Caco-2 (cell line): ENCODE measurements at regions of chr10 and their contacts with region 1.

Region 1: GRCh38 chr10:59561477-59562121 is 148.1 kb downstream of the SLC16A9 start:
- DNase-seq: no peak
- H3K4me3 ChIP-seq: no peak overlapping the region
- H3K4me3 Mint-ChIP-seq: peak overlapping the region; percentile 11
- H3K27ac Mint-ChIP-seq: no peak overlapping the region
- H3K4me1 ChIP-seq: peaks cover 23% of the 10 kb centered on the region
- H3K4me1 Mint-ChIP-seq: peaks cover 35% of the 10 kb centered on the region
- H3K27me3 ChIP-seq: no peaks in the 10 kb centered on the region
- H3K27me3 Mint-ChIP-seq: no peaks in the 10 kb centered on the region
- CTCF ChIP-seq: no peak

Region 2: GRCh38 chr10:59550061-59550460 is 11.5 kb before region 1 on chr10:
- CTCF ChIA-PET with region 1: no interaction called
- POLR2A ChIA-PET with region 1: interaction called, 3 read pairs
- intact Hi-C with region 1: loop called (anchors 1 kb)
- DNase-seq: peak in 1 of 2 experiments; percentile 74
- H3K4me3 ChIP-seq: no peak overlapping the region
- H3K4me3 Mint-ChIP-seq: peak overlapping the region; percentile 23
- H3K27ac Mint-ChIP-seq: peak overlapping the region; percentile 83
- H3K4me1 ChIP-seq: peaks cover 21% of the 10 kb centered on the region
- H3K4me1 Mint-ChIP-seq: peaks cover 15% of the 10 kb centered on the region
- H3K27me3 ChIP-seq: no peaks in the 10 kb centered on the region
- H3K27me3 Mint-ChIP-seq: no peaks in the 10 kb centered on the region
- CTCF ChIP-seq: no peak